ENCODE measurements at regions of chr11 and their contacts with region 1.

Region 1: GRCh38 chr11:61947486-61948210 is 2.5 kb upstream of the BEST1 start:
- DNase-seq: peak; percentile 87 to 92
- ATAC-seq: peak; percentile 82 to 88 (median 86)
- H3K4me3 ChIP-seq: no peak overlapping the region
- H3K27ac ChIP-seq: no peak overlapping the region
- H3K4me1 ChIP-seq: no peaks in the 10 kb centered on the region
- H3K27me3 ChIP-seq: no peaks in the 10 kb centered on the region
- CTCF ChIP-seq: peak; percentile 92

Region 2: DNA sequence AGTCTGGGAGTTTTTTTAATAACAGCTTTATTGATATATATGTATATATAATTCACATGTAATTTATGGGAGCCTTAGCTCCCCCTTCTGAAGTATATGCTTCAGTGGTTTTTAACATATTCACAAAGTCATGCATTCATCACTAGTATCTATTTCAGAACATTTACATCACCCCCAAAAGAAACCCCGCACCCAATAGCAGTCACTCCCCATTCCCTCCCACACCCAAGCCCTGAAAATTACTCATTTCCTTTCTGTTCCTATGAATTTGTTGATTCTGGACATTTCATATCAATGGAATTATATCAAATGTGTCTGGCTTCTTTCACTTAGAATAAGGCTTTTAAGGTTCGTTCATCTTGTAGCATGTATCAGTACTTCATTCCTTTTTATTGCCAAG is 331.2 kb before region 1 on chr11:
- intact Hi-C with region 1: no loop called
- DNase-seq: no peak
- ATAC-seq: no peak
- H3K4me3 ChIP-seq: no peak overlapping the region
- H3K27ac ChIP-seq: no peak overlapping the region
- H3K4me1 ChIP-seq: no peaks in the 10 kb centered on the region
- H3K27me3 ChIP-seq: peaks cover 0 to 7% (median 0%) of the 10 kb centered on the region in 3 donors
- CTCF ChIP-seq: no peak

Region 3: DNA sequence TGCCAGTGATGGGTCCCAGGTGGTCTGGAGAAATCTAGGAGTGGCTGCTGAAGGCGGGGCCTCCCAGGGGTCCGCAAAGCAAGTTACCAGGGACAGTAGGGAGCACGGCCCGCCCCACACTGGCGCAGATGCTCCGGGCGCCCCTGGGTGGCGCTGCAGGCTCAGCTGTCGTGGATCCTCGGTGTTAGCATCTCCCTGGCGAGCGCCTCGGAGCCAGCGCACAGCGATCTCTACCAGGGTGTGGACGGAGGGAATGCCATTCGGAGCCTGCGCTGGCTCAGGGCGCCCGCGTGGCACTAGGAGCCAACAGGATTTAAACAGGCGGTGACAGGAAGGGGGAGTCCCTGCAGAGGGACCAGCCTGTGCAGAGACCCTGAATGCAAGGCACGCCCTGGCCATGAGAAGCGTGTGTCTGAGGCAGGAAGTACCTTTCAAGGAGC is 76.5 kb before region 1 on chr11:
- intact Hi-C with region 1: loop called (anchors 1 kb)
- DNase-seq: peak; percentile 82 to 89
- ATAC-seq: peak; percentile 84 to 94 (median 92)
- H3K4me3 ChIP-seq: peak overlapping the region; percentile 20
- H3K27ac ChIP-seq: peak overlapping the region; percentile 30
- H3K4me1 ChIP-seq: peaks cover 7% of the 10 kb centered on the region
- H3K27me3 ChIP-seq: no peaks in the 10 kb centered on the region
- CTCF ChIP-seq: peak; percentile 93

Region 4: DNA sequence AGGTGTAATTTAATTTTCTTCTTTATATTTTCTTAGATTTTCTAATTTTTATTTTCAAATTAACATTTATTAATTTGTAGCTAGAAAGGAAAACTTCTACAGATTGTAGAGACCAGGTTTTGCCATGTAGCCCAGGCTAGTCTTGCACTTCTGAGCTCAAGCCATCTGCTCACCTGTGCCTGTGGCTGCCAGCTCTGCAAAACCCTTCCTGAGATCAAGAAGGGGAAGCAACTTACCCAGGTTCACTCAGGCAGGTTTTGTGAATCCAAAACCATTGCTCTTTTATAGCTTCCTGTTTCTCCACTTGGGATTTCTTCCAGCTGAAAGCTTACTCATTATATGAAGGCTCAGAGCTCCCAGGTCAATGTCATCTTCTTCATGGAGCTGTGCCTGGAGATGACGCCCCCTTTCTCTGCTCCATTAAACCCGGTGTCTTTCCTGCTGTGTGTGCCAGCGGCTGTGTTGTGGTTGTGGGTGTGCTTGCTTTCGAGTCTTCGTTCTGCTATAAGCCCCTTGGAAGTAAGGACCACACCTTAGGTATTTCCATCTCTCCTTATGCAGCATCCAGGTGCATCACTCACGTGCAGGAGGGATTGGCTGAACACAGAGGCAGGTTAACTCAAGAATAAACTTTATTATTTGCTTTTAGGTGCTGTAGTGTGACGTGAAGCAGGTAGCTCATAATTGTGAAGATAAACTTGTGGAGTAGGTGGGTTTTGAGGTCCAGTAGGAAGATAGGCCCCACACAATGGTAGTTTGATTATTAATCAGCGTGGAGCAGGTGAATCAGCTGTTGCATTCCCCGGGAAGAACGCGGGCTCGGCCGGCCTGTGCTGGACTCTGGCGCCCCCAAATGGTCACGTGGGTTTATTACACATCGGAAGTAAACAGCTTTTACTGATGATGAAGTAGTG is 134.0 kb after region 1 on chr11:
- intact Hi-C with region 1: loop called in 1 of 2 experiments (anchors 2 kb)
- DNase-seq: peak; percentile 75 to 83
- ATAC-seq: peak; percentile 82 to 93 (median 89)
- H3K4me3 ChIP-seq: no peak overlapping the region
- H3K27ac ChIP-seq: no peak overlapping the region
- H3K4me1 ChIP-seq: peaks cover 3% of the 10 kb centered on the region
- H3K27me3 ChIP-seq: no peaks in the 10 kb centered on the region
- CTCF ChIP-seq: peak; percentile 90